Posterior vena cava (tissue), 2 donors: ENCODE measurements at regions of chr10 and their contacts with region 1.

Region 1: DNA sequence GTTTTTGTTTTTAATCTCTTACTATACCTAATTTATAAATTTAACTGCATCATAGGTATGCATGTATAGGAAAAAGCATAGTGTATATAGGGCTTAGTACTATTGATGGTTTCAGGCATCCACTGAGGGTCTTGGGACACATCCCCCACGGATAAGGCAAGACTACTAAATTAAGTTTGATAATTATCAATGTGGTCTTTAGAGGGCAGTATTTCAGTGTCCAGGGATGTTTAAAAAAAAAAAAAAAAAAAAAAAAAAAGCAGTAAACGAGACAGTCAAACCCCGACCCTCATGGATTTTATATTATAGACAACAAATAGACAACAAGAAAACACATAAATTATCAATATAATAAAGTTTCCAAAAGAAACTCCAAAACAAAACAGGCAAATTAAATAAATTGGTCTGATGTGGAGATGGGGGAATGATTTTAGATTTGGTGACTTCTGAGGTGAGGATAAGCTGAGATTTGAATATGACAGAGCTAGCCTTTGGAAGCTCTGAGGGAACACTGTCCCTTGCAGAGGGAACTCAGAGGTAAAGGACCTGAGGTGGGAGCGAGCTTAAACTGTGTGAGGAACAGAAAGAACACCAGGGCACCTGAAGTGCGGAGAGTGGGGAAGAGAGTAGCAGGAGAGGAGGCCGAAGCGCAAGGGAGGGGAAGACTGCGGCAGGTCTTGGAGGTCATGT is 14.8 kb downstream of the ACSM6 start:
- DNase-seq: no peak

Region 2: DNA sequence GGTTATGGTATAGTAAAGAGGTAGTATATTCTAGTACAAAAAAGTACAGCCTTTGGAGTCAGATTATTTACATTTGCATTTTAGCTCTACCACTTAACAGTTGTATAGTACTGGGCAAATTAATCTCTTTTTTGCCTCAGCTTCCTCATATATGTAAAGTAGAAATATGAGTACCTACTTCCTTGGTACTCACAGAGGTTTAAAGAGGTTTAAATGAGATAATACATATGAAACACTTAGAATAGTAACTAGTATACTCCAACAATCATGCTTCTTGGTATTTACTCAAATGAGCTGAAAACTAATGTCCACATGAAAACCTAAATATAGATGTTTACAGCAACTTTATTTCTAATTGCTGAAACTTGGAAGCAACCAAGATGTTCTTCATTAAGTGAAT is 1521.1 kb before region 1 on chr10:
- intact Hi-C with region 1: no loop called
- DNase-seq: no peak

Region 3: GRCh38 chr10:95236068-95236903 is 27.4 kb after region 1 on chr10:
- intact Hi-C with region 1: loop called in 1 of 2 experiments (anchors 1 kb)
- DNase-seq: no peak